HepG2 (cell line): ENCODE measurements at regions of chr12 and their contacts with region 1.

Region 1: DNA sequence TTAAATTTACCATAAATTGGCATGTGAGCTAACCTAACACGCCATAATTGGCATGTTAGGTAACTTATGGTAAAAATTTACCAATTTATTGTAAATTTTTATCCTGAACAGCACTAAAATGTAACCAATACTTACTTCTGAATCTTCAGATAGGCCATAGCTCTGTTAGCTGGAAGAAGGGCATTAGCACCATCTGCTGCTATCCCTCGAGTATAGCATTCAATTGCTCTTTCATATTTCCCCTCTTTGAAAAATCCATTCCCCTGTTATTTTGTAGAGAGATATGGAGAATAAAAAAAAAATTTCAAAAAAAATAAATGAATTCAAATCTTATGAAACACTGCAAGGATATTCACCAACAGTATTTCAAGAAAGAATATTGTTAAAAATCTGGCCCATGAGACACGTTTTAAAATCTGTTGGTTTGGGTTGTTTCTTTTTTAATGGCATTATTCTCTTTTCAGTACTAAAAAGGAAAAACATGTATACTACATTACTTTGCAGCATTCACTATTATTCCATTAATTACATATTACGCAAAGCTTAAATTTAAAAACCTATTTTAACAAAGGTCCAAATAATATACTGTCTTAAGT is 19.1 kb downstream of the RPAP3 start:
- DNase-seq: peak; percentile 25
- ATAC-seq: peak; percentile 57; the same call in 2 of the 3 replicates
- H3K4me3 ChIP-seq: no peak overlapping the region
- H3K27ac ChIP-seq: no peak overlapping the region
- H3K4me1 ChIP-seq: no peaks in the 10 kb centered on the region
- H3K27me3 ChIP-seq: no peaks in the 10 kb centered on the region
- CTCF ChIP-seq: peak; percentile 64
- EP300 ChIP-seq: no peak
- POLR2A ChIP-seq: no peak
- RAD21 ChIP-seq: peak; percentile 63; the same call in 1 of the 2 replicates

Region 2: DNA sequence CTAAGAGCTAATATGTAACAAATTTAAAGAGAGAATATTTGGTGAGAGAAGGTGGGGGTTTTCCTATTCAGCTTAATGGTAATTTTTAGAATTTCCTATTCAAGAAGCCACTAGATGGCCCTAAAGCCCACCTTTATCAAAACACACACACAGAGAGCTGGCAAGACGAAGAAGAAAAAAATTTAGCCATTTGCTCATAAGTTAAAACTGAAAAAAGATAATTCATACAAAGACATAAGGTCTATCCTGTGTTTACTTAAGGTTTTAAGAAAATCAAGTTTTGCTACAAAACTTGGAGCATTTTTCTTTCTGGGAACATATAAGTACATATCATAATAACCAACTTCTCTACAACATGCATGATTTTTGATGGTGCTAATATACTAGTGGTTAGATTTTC is 654.1 kb before region 1 on chr12:
- CTCF ChIA-PET with region 1: interaction called, 3 read pairs
- POLR2A ChIA-PET with region 1: no interaction called
- in situ Hi-C with region 1: no loop called
- intact Hi-C with region 1: loop called (anchors 5 kb)
- DNase-seq: peak; percentile 23
- ATAC-seq: peak; percentile 46; the same call in 1 of the 3 replicates
- H3K4me3 ChIP-seq: no peak overlapping the region
- H3K27ac ChIP-seq: no peak overlapping the region
- H3K4me1 ChIP-seq: no peaks in the 10 kb centered on the region
- H3K27me3 ChIP-seq: peaks cover 0 to 5% of the 10 kb centered on the region in 2 experiments; a peak in 2 of 5 replicates
- CTCF ChIP-seq: peak; percentile 60
- EP300 ChIP-seq: no peak
- POLR2A ChIP-seq: no peak
- RAD21 ChIP-seq: 0 out of 2 replicates have a peak, but pooled peaks have one; percentile 39

Region 3: DNA sequence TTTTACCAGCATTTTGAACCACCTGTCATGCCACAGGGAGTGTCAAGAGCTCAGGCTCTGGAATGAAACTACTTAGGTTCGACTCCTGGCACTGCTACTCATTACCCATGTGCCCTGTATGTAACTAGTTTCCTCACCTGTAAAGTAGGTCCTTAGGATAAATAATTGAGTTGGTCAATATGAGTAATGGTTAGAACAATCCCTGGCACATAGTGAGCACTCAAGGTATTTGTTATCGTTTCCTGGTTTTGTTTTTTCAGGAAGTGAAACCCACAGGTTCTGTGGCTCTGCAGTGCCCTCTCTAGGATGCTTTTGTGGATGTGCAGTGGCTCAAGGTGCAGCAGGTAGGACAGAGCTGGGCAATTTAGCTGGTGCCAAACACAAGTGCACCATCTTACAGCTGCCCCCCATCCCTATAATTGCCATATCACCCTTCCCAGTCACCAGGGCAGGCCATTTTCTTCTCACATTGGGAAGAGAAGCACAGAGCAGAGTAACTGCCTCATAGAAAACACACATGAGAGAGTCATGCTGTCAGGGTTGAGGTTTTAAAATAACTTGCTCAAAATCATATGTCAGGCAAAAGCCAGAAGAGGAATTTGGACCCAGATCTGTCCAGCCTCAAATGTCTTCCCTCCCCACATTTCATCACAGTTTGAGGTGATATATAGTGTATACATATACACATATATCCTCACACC is 278.4 kb before region 1 on chr12:
- CTCF ChIA-PET with region 1: no interaction called
- POLR2A ChIA-PET with region 1: no interaction called
- in situ Hi-C with region 1: no loop called
- intact Hi-C with region 1: no loop called
- DNase-seq: peak; percentile 6
- ATAC-seq: peak; percentile 35; the same call in 1 of the 3 replicates
- H3K4me3 ChIP-seq: no peak overlapping the region
- H3K27ac ChIP-seq: no peak overlapping the region
- H3K4me1 ChIP-seq: no peaks in the 10 kb centered on the region
- H3K27me3 ChIP-seq: no peaks in the 10 kb centered on the region
- CTCF ChIP-seq: peak; percentile 36
- EP300 ChIP-seq: no peak
- POLR2A ChIP-seq: no peak
- RAD21 ChIP-seq: 0 out of 2 replicates have a peak, but pooled peaks have one; percentile 12

Region 4: DNA sequence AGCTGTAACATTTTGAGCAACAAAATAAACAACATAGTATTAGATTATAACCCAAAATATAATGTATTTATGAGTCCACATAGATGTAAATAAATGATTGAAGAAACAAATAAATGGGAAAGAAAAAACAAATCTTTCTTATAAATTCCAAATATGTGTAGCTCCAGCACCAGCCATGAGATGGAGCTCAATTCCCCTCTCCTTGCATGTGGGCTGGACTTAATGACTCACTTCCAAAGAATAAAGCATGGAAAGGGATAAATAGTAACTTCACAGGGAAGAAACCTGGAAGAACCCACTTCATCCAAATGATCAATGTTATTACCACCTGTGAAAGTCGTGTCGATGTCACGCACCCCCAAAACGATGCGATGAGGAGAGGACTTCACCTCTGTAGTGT is 139.7 kb before region 1 on chr12:
- CTCF ChIA-PET with region 1: no interaction called
- POLR2A ChIA-PET with region 1: no interaction called
- in situ Hi-C with region 1: no loop called
- intact Hi-C with region 1: loop called (anchors 2 kb)
- DNase-seq: no peak
- ATAC-seq: no peak
- H3K4me3 ChIP-seq: no peak overlapping the region
- H3K27ac ChIP-seq: no peak overlapping the region
- H3K4me1 ChIP-seq: no peaks in the 10 kb centered on the region
- H3K27me3 ChIP-seq: no peaks in the 10 kb centered on the region; a peak in 1 of 5 replicates
- CTCF ChIP-seq: no peak
- EP300 ChIP-seq: no peak
- POLR2A ChIP-seq: no peak
- RAD21 ChIP-seq: no peak

Region 5: GRCh38 chr12:47636908-47637780 is 49.6 kb before region 1 on chr12:
- CTCF ChIA-PET with region 1: no interaction called
- POLR2A ChIA-PET with region 1: no interaction called
- in situ Hi-C with region 1: no loop called
- intact Hi-C with region 1: no loop called
- DNase-seq: peak; percentile 58
- ATAC-seq: peak; percentile 79
- H3K4me3 ChIP-seq: no peak overlapping the region
- H3K27ac ChIP-seq: no peak overlapping the region
- H3K4me1 ChIP-seq: 0 out of 2 replicates have a peak, but pooled peaks cover 5% of the 10 kb centered on the region
- H3K27me3 ChIP-seq: no peaks in the 10 kb centered on the region
- CTCF ChIP-seq: peak; percentile 75
- EP300 ChIP-seq: no peak
- POLR2A ChIP-seq: no peak
- RAD21 ChIP-seq: no peak

Region 6: DNA sequence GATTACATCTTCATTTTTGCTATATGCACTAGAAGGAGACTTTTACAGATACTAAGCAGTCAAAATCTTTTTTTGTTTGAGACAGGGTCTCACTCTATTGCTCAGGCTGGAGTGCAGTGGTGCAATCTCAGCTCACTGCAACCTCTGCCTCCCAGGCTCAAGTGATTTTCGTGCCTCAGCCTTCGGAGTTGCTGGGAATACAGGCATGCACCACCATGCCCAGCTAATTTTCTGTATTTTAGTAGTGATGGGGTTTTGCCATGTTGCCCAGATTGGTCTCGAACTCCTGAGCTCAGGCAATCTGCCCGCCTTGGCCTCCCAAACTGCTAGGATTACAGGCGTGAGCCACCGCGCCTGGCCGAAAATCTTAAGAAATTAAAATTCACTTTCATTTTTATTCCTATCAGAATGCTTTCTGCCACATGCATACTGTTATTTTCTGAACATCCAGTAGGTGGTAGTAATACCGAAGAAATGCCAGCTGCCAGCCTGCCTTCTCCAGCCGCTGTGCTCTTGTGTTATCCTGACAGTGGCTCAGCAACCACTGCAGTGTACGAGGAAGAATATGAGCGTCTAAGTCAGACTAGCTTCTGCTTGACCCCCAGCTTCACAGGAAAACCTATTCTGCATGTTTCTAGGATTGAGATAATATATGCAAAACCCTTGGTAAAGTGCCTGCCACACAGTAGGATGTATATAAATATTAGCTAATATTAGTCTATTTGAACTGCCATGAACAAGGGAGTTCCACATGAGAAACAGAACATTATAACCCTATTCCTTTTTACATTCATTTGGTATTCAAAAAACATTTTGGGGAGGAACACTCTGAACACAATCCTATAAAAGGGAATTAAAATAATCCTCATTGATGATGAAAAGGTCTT is 35.1 kb before region 1 on chr12:
- CTCF ChIA-PET with region 1: interaction called, 28 read pairs
- POLR2A ChIA-PET with region 1: no interaction called
- in situ Hi-C with region 1: loop called (anchors 5 kb)
- intact Hi-C with region 1: loop called (anchors 1 kb)
- DNase-seq: peak; percentile 64
- ATAC-seq: peak; percentile 84
- H3K4me3 ChIP-seq: peak overlapping the region in 1 of 3 experiments; percentile 44; a peak in 2 of 6 replicates
- H3K27ac ChIP-seq: peak overlapping the region; percentile 73
- H3K4me1 ChIP-seq: peaks cover 27% of the 10 kb centered on the region
- H3K27me3 ChIP-seq: no peaks in the 10 kb centered on the region
- CTCF ChIP-seq: peak; percentile 85
- EP300 ChIP-seq: no peak
- POLR2A ChIP-seq: no peak
- RAD21 ChIP-seq: peak; percentile 62; the same call in 1 of the 2 replicates

Region 7: DNA sequence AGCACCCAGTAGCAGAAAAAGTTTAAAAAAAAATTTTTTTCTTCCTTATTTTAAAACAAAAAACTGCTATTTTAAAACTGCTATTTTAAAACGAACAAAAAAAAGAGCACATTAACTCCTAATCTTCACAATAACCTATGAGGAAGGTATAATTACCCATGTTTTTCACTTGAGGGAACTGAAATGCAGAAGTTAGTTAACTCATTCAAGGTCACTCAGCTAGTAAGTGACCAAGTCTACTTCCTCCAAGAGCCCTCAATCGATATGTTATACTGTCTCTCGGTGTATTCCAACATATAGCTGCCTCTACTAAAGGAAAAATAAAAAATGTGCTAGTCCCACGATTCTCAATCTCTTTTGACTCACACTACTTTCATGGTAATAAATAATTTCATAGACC is 11.3 kb after region 1 on chr12:
- CTCF ChIA-PET with region 1: no interaction called
- POLR2A ChIA-PET with region 1: no interaction called
- in situ Hi-C with region 1: no loop called
- intact Hi-C with region 1: no loop called
- DNase-seq: no peak
- ATAC-seq: no peak
- H3K4me3 ChIP-seq: no peak overlapping the region
- H3K27ac ChIP-seq: no peak overlapping the region
- H3K4me1 ChIP-seq: peaks cover under 1% of the 10 kb centered on the region; the same call in 1 of the 2 replicates
- H3K27me3 ChIP-seq: no peaks in the 10 kb centered on the region
- CTCF ChIP-seq: no peak
- EP300 ChIP-seq: no peak
- POLR2A ChIP-seq: no peak
- RAD21 ChIP-seq: no peak